ENCODE measurements at regions of chr4 and their contacts with region 1.

Region 1: GRCh38 chr4:95693594-95693993 is 144.8 kb upstream of the UNC5C start:
- DNase-seq: peak; percentile 12

Region 2: GRCh38 chr4:94623126-94623911 is 1070.3 kb before region 1 on chr4:
- CTCF ChIA-PET with region 1: interaction called, 12 read pairs
- POLR2A ChIA-PET with region 1: no interaction called
- DNase-seq: no peak

Measured in HEK293T (cell line).